IMR-90 (cell line): ENCODE measurements at regions of chrX and their contacts with region 1.

Region 1: DNA sequence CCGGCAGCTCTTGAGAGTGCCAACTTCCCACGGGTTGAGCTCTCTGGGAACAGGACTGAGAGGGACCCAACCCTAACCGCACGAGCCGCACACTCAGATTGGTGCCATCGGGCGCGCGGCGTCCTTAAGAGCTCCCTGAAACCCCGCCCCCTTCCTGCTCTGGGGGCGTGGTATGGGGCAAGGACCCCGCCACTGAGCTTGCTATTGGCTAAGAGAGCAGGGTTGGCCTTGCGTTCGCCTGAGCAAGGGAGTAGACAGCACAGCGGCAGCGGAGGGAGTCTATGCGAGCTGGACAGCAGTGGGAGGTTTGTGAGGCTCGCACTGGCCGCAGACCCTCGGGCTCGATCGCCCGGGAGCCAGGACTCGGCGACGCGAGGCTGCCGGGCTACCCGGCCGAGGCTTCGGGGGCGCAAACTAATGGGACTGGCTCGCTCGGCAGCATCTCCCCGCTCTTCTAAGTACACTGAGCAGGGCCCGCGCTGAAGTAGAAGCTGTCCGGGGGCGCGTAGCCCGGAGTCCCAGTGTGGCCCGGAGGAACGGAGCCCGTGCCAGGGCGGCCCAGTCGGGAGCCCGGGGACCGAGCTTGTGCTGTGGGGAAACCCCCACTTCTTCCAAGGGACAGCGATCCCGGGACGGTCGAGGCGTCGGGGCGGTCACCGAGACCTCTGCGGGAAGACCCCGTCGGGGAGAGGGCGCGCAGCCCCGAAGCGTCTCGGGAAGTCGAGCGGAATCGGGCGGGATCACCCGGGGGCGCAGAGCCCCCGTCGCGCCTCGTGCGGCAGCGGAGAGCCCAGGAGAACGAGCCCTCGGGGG is at the start of gene EFNB1:
- DNase-seq: peak; percentile 96
- ATAC-seq: peak; percentile 84
- H3K4me3 ChIP-seq: peak within 1 kb of the TSS; percentile 86
- H3K27ac ChIP-seq: peak within 1 kb of the TSS; percentile 39
- H3K4me1 ChIP-seq: peaks cover 3% of the 10 kb centered on the region; the same call in 1 of the 2 replicates
- H3K27me3 ChIP-seq: peaks cover 13% of the 10 kb centered on the region
- CTCF ChIP-seq: no peak
- POLR2A ChIP-seq: peak; percentile 95
- RAD21 ChIP-seq: 0 out of 2 replicates have a peak, but pooled peaks have one; percentile 19
- total RNA-seq, gene EFNB1: 17.8 and 17.9 TPM in 2 replicates

Region 2: DNA sequence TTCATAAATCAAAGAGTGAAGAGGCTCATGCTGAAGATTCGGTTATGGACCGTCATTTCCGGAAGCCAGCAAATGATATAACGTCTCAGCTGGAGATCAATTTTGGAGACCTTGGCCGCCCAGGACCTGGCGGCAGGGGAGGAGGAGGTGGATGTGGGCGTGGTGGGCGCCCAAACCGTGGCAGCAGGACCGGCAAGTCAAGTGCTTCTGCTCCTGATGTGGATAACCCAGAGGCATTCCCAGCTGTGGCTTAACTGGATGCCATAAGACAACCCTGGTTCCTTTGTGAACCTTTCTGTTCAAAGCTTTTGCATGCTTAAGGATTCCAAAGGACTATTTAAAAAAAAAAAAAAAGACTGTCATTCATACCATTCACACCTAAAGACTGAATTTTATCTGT is 44.1 kb before region 1 on chrX:
- CTCF ChIA-PET with region 1: no interaction called
- POLR2A ChIA-PET with region 1: no interaction called
- dilution Hi-C with region 1: no loop called
- in situ Hi-C with region 1: no loop called
- intact Hi-C with region 1: no loop called
- DNase-seq: no peak
- ATAC-seq: no peak
- H3K4me3 ChIP-seq: no peak overlapping the region
- H3K27ac ChIP-seq: no peak overlapping the region
- H3K4me1 ChIP-seq: no peaks in the 10 kb centered on the region
- H3K27me3 ChIP-seq: peaks cover 19% of the 10 kb centered on the region
- CTCF ChIP-seq: no peak
- POLR2A ChIP-seq: no peak
- RAD21 ChIP-seq: no peak

Region 3: GRCh38 chrX:68929332-68930150 is 100.6 kb after region 1 on chrX:
- CTCF ChIA-PET with region 1: interaction called, 3 read pairs
- POLR2A ChIA-PET with region 1: no interaction called
- dilution Hi-C with region 1: no loop called
- in situ Hi-C with region 1: no loop called
- intact Hi-C with region 1: loop called (anchors 10 kb)
- DNase-seq: peak; percentile 85
- ATAC-seq: peak; percentile 84
- H3K4me3 ChIP-seq: no peak overlapping the region
- H3K27ac ChIP-seq: no peak overlapping the region
- H3K4me1 ChIP-seq: peaks cover 18% of the 10 kb centered on the region
- H3K27me3 ChIP-seq: peaks cover 1% of the 10 kb centered on the region; the same call in 1 of the 2 replicates
- CTCF ChIP-seq: no peak
- POLR2A ChIP-seq: no peak
- RAD21 ChIP-seq: 0 out of 2 replicates have a peak, but pooled peaks have one; percentile 4

Region 4: DNA sequence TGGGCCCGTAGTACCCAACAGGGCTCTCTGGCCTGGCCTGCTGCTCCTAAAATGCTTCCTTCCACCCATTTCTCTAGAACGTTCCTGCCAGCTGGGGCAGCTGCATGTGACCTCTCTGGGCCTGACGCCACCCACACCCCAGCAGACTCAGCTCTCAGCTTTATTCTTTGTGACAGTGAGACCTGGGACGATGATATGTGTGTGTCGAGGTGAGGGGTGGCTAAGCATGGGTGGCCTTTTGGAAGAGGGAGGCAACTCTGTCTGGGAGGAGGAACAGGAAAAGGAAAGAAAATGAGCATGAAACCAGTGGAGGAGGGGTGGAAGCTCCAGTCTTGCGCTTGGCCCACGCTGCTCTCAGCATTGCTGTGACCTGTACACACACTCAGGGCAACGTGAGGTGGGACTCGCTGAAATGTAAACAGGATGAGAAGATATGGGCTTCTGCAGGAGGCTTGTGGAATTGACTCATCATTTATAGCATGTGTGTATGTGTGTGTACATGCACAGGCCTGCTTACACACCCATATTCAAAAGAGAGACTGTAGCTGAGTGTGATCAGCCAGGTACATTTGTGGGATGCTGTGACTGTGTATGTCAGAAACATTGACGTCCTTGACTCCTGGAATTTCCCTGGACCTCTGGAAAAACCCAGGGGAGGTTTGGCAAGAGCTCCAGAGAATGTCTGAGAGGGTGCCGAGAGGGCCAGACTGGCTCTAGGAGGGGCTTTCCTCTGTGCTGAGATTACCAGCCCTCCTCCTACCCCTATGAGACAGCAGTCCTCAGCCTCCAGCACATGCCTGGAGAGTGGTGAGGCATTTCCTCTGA is 198.4 kb after region 1 on chrX:
- CTCF ChIA-PET with region 1: interaction called, 4 read pairs
- POLR2A ChIA-PET with region 1: no interaction called
- dilution Hi-C with region 1: no loop called
- in situ Hi-C with region 1: loop called (anchors 25 kb)
- intact Hi-C with region 1: no loop called
- DNase-seq: peak; percentile 93
- ATAC-seq: peak; percentile 77
- H3K4me3 ChIP-seq: no peak overlapping the region
- H3K27ac ChIP-seq: peak overlapping the region; percentile 84
- H3K4me1 ChIP-seq: peaks cover 20% of the 10 kb centered on the region
- H3K27me3 ChIP-seq: peaks cover 2% of the 10 kb centered on the region; the same call in 1 of the 2 replicates
- CTCF ChIP-seq: no peak
- POLR2A ChIP-seq: no peak
- RAD21 ChIP-seq: no peak; the same call in 1 of the 2 replicates

Region 5: DNA sequence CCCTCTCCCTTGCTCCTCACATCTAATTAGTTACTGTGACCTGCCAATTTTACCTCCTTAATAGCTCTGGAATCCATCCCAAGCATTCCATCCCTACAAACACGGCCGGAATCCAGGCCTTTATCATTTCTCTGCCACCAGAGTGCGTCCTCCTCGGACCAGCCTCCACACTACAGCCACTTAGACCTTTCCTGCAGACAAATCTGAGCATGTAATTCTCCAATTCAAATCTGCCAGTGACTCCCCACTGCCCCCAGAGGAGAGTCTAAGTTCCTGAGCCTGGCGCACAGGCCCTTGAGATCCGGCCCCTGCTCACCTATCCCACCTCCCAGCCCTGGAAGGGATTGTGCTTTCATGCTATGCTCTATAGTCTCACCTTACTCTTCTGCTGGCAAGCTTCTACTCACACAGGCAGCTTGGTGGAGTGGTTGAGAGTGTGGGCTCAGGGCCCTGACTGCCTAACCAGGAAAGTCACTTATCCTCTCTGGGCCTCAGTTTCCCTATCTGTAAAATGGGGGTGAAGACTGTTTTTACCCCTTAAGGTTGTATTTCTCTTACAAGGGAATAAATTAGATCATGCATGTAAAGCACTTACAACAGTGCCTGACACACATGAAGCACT is 305.1 kb after region 1 on chrX:
- CTCF ChIA-PET with region 1: interaction called, 5 read pairs
- POLR2A ChIA-PET with region 1: no interaction called
- dilution Hi-C with region 1: no loop called
- in situ Hi-C with region 1: no loop called
- intact Hi-C with region 1: loop called (anchors 2 kb)
- DNase-seq: peak; percentile 69
- ATAC-seq: peak; percentile 73
- H3K4me3 ChIP-seq: no peak overlapping the region
- H3K27ac ChIP-seq: no peak overlapping the region
- H3K4me1 ChIP-seq: peaks cover 13% of the 10 kb centered on the region
- H3K27me3 ChIP-seq: peaks cover 22% of the 10 kb centered on the region; the same call in 1 of the 2 replicates
- CTCF ChIP-seq: peak; percentile 55
- POLR2A ChIP-seq: no peak
- RAD21 ChIP-seq: peak; percentile 45

Region 6: DNA sequence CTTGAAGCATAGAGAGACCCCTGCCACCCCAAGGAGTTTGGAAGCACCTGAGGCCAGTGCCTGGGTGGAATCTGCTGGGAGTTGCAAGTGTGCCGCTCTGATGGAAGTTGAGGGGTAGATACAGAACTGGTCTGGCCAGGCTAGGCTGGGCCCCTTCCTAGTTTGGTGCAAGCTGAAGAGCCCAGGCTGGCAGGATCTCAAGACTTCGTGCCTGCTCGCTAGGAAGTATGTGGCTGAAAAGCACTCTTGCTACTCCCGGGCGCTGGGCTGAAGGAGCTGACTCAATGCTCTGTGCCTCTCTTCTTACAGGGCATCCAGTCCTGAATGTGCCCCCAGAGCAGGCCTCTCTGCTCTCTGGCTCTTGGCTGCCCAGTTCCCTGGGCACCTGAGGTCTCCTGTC is 388.0 kb after region 1 on chrX:
- CTCF ChIA-PET with region 1: interaction called, 19 read pairs
- POLR2A ChIA-PET with region 1: no interaction called
- dilution Hi-C with region 1: no loop called
- in situ Hi-C with region 1: loop called (anchors 5 kb)
- intact Hi-C with region 1: loop called (anchors 1 kb)
- DNase-seq: peak; percentile 5
- ATAC-seq: no peak
- H3K4me3 ChIP-seq: no peak overlapping the region
- H3K27ac ChIP-seq: no peak overlapping the region
- H3K4me1 ChIP-seq: peaks cover under 1% of the 10 kb centered on the region; the same call in 1 of the 2 replicates
- H3K27me3 ChIP-seq: peaks cover 44% of the 10 kb centered on the region
- CTCF ChIP-seq: no peak
- POLR2A ChIP-seq: no peak
- RAD21 ChIP-seq: no peak

Region 7: GRCh38 chrX:69298466-69299140 is 469.7 kb after region 1 on chrX:
- CTCF ChIA-PET with region 1: no interaction called
- POLR2A ChIA-PET with region 1: interaction called, 10 read pairs
- dilution Hi-C with region 1: no loop called
- in situ Hi-C with region 1: no loop called
- intact Hi-C with region 1: no loop called
- DNase-seq: peak; percentile 4
- ATAC-seq: no peak
- H3K4me3 ChIP-seq: no peak overlapping the region
- H3K27ac ChIP-seq: no peak overlapping the region
- H3K4me1 ChIP-seq: no peaks in the 10 kb centered on the region
- H3K27me3 ChIP-seq: peaks cover 42% of the 10 kb centered on the region
- CTCF ChIP-seq: no peak
- POLR2A ChIP-seq: no peak
- RAD21 ChIP-seq: no peak